ENCODE measurements at regions of chr10 and their contacts with region 1.

Region 1: DNA sequence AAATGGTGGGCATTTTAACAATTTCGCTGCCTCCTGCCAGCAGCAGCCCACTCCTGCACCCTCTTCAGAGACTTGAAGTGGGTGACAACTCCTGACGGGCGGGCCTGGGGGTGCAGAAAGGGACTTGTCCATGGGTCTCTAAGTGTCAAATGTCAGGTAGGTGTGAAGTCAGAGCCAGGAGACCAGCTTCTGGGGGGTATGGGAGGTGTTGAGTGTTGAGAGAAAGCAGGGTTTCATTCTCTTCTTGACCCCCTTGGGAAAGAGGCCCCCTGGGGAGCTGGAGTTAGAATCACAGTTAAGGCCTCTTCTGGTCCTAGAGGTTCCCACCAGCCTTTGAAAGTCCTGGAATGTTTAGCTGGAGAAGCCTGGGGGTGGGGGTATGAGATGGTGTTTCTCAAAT is 11.6 kb upstream of the PALD1 start:
- DNase-seq: no peak
- H3K4me3 ChIP-seq: no peak overlapping the region
- H3K27ac ChIP-seq: no peak overlapping the region
- H3K4me1 ChIP-seq: peaks cover 8% of the 10 kb centered on the region
- H3K27me3 ChIP-seq: peaks cover 12% of the 10 kb centered on the region
- CTCF ChIP-seq: no peak

Region 2: GRCh38 chr10:70523057-70523456 is 56.1 kb after region 1 on chr10:
- CTCF ChIA-PET with region 1: no interaction called
- dilution Hi-C with region 1: loop called (anchors 5 kb)
- in situ Hi-C with region 1: no loop called
- intact Hi-C with region 1: no loop called
- DNase-seq: no peak
- H3K4me3 ChIP-seq: no peak overlapping the region
- H3K27ac ChIP-seq: no peak overlapping the region
- H3K4me1 ChIP-seq: peaks cover 5% of the 10 kb centered on the region
- H3K27me3 ChIP-seq: no peaks in the 10 kb centered on the region
- CTCF ChIP-seq: no peak